Transverse colon (tissue), 4 donors: ENCODE measurements at regions of chr6 and their contacts with region 1.

Region 1: DNA sequence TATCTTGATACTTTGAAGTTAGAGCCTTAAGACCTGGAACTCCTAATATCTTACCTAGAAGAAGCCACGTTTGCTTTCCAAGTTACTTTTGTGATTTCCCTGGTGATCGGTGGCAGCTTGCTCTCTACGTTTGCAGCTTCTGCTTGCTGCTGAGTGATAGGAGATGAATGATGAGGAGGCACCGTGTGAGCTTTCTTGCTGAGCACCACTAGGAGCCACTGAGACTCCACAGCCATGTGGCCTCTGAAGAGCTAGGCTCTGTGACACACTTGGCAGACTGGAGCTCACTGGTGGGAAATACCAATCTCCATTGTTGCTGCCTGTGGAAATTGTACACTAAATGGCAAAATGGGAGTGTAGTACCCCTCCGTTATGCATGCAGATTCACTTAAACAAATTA is 161.8 kb downstream of the IBTK start:
- DNase-seq: no peak
- H3K4me3 ChIP-seq: no peak overlapping the region
- H3K27ac ChIP-seq: no peak overlapping the region
- H3K4me1 ChIP-seq: peaks cover 0 to 5% (median 0%) of the 10 kb centered on the region in 4 donors
- H3K27me3 ChIP-seq: no peaks in the 10 kb centered on the region
- CTCF ChIP-seq: no peak
- EP300 ChIP-seq: no peak
- POLR2A ChIP-seq: no peak

Region 2: DNA sequence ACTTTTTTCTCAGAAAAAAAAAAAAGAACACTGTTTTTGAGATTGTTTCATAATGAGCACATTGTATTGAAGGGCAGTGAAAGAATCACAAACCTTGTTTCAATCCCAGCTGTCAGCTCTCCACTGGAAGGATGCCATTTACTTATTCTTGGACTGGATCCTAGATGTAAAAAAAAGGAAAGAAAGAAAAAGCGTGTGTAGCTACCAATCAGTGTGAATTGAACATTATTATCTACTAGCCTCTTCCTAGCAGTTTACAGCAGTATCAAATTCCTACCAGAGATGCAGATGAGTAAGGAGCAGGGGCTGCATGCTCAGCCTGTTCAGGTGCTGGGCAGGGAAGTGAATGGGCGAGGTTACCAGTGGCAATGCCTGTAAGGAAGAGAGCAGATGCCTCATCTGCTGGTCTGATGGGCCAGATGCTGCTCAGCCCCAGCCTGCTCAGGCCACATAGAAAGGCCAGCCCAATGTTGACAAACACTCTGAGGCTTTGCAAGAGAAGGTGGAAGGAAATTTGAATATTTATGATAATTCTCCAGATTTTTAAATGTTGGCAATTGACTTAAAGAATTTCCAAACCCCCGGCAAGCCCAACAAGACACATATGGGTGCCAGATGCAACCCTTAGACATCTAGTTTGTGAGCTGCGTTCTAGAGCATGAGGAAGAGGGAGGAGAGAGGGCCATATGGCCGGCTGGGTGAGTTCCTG is 27.7 kb before region 1 on chr6:
- in situ Hi-C with region 1: no loop called
- intact Hi-C with region 1: no loop called
- DNase-seq: no peak
- H3K4me3 ChIP-seq: no peak overlapping the region
- H3K27ac ChIP-seq: no peak overlapping the region
- H3K4me1 ChIP-seq: no peaks in the 10 kb centered on the region
- H3K27me3 ChIP-seq: no peaks in the 10 kb centered on the region
- CTCF ChIP-seq: no peak
- EP300 ChIP-seq: no peak
- POLR2A ChIP-seq: no peak

Region 3: GRCh38 chr6:82111114-82111513 is 25.4 kb after region 1 on chr6:
- in situ Hi-C with region 1: no loop called
- intact Hi-C with region 1: loop called (anchors 2 kb)
- DNase-seq: no peak
- H3K4me3 ChIP-seq: no peak overlapping the region
- H3K27ac ChIP-seq: no peak overlapping the region
- H3K4me1 ChIP-seq: no peaks in the 10 kb centered on the region
- H3K27me3 ChIP-seq: no peaks in the 10 kb centered on the region
- CTCF ChIP-seq: no peak
- EP300 ChIP-seq: no peak
- POLR2A ChIP-seq: no peak